CD4-positive, alpha-beta memory T cell (primary cell): ENCODE measurements at regions of chr10 and their contacts with region 1.

Region 1: GRCh38 chr10:6401562-6402348 is 178.3 kb downstream of the PRKCQ start:
- DNase-seq: peak; percentile 57 to 70 (median 65)
- H3K4me3 ChIP-seq: no peak overlapping the region
- H3K4me3 Mint-ChIP-seq: peak overlapping the region in 2 of 8 donors; percentile 51 to 63
- H3K27ac ChIP-seq: no peak overlapping the region
- H3K27ac Mint-ChIP-seq: peak overlapping the region; percentile 32 to 90 (median 64)
- H3K4me1 ChIP-seq: peaks cover 16% of the 10 kb centered on the region
- H3K4me1 Mint-ChIP-seq: peaks cover 8 to 24% (median 13%) of the 10 kb centered on the region in 4 donors
- H3K27me3 ChIP-seq: no peaks in the 10 kb centered on the region
- H3K27me3 Mint-ChIP-seq: peaks cover 0 to 1% of the 10 kb centered on the region in 2 donors

Region 2: GRCh38 chr10:6095810-6096570 is 305.8 kb before region 1 on chr10:
- CTCF ChIA-PET with region 1: interaction called, 12 read pairs
- POLR2A ChIA-PET with region 1: no interaction called
- intact Hi-C with region 1: no loop called
- DNase-seq: no peak
- H3K4me3 ChIP-seq: no peak overlapping the region
- H3K4me3 Mint-ChIP-seq: no peak overlapping the region
- H3K27ac ChIP-seq: no peak overlapping the region
- H3K27ac Mint-ChIP-seq: peak overlapping the region in 4 of 7 donors; percentile 10 to 42 (median 26)
- H3K4me1 ChIP-seq: peaks cover 37% of the 10 kb centered on the region
- H3K4me1 Mint-ChIP-seq: peaks cover 37 to 65% (median 48%) of the 10 kb centered on the region in 4 donors
- H3K27me3 ChIP-seq: no peaks in the 10 kb centered on the region
- H3K27me3 Mint-ChIP-seq: no peaks in the 10 kb centered on the region

Region 3: GRCh38 chr10:6144406-6145165 is 257.2 kb before region 1 on chr10:
- CTCF ChIA-PET with region 1: interaction called, 14 read pairs
- POLR2A ChIA-PET with region 1: interaction called, 3 read pairs
- intact Hi-C with region 1: no loop called
- DNase-seq: peak; percentile 85 to 92 (median 87)
- H3K4me3 ChIP-seq: peak overlapping the region; percentile 61 to 85
- H3K4me3 Mint-ChIP-seq: peak overlapping the region; percentile 88 to 95 (median 91)
- H3K27ac ChIP-seq: peak overlapping the region; percentile 84
- H3K27ac Mint-ChIP-seq: peak overlapping the region; percentile 89 to 97 (median 92)
- H3K4me1 ChIP-seq: peaks cover 77% of the 10 kb centered on the region
- H3K4me1 Mint-ChIP-seq: peaks cover 45 to 85% (median 64%) of the 10 kb centered on the region in 4 donors
- H3K27me3 ChIP-seq: no peaks in the 10 kb centered on the region
- H3K27me3 Mint-ChIP-seq: no peaks in the 10 kb centered on the region

Region 4: GRCh38 chr10:6171881-6172695 is 229.7 kb before region 1 on chr10:
- CTCF ChIA-PET with region 1: interaction called, 47 read pairs
- POLR2A ChIA-PET with region 1: interaction called, 21 read pairs
- intact Hi-C with region 1: no loop called
- DNase-seq: no peak
- H3K4me3 ChIP-seq: no peak overlapping the region
- H3K4me3 Mint-ChIP-seq: peak overlapping the region in 4 of 8 donors; percentile 29 to 79 (median 62)
- H3K27ac ChIP-seq: no peak overlapping the region
- H3K27ac Mint-ChIP-seq: peak overlapping the region in 6 of 7 donors; percentile 22 to 74 (median 58)
- H3K4me1 ChIP-seq: peaks cover 77% of the 10 kb centered on the region
- H3K4me1 Mint-ChIP-seq: peaks cover 50 to 94% (median 72%) of the 10 kb centered on the region in 4 donors
- H3K27me3 ChIP-seq: no peaks in the 10 kb centered on the region
- H3K27me3 Mint-ChIP-seq: no peaks in the 10 kb centered on the region

Region 5: GRCh38 chr10:6275022-6275997 is 126.4 kb before region 1 on chr10:
- CTCF ChIA-PET with region 1: interaction called, 21 read pairs
- POLR2A ChIA-PET with region 1: interaction called, 12 read pairs
- intact Hi-C with region 1: no loop called
- DNase-seq: peak; percentile 81 to 98 (median 86)
- H3K4me3 ChIP-seq: peak overlapping the region in 1 of 2 donors; percentile 26
- H3K4me3 Mint-ChIP-seq: peak overlapping the region; percentile 63 to 87 (median 78)
- H3K27ac ChIP-seq: peak overlapping the region; percentile 59
- H3K27ac Mint-ChIP-seq: peak overlapping the region; percentile 91 to 98 (median 94)
- H3K4me1 ChIP-seq: peaks cover 40% of the 10 kb centered on the region
- H3K4me1 Mint-ChIP-seq: peaks cover 26 to 52% (median 37%) of the 10 kb centered on the region in 4 donors
- H3K27me3 ChIP-seq: no peaks in the 10 kb centered on the region
- H3K27me3 Mint-ChIP-seq: no peaks in the 10 kb centered on the region

Region 6: GRCh38 chr10:6388261-6388893 is 13.4 kb before region 1 on chr10:
- CTCF ChIA-PET with region 1: interaction called, 20 read pairs
- POLR2A ChIA-PET with region 1: interaction called, 7 read pairs
- intact Hi-C with region 1: no loop called
- DNase-seq: no peak
- H3K4me3 ChIP-seq: no peak overlapping the region
- H3K4me3 Mint-ChIP-seq: no peak overlapping the region
- H3K27ac ChIP-seq: no peak overlapping the region
- H3K27ac Mint-ChIP-seq: peak overlapping the region in 1 of 7 donors; percentile 44
- H3K4me1 ChIP-seq: no peaks in the 10 kb centered on the region
- H3K4me1 Mint-ChIP-seq: peaks cover 0 to 1% (median 0%) of the 10 kb centered on the region in 4 donors
- H3K27me3 ChIP-seq: no peaks in the 10 kb centered on the region
- H3K27me3 Mint-ChIP-seq: no peaks in the 10 kb centered on the region

Region 7: GRCh38 chr10:6755781-6756460 is 354.2 kb after region 1 on chr10:
- CTCF ChIA-PET with region 1: no interaction called
- POLR2A ChIA-PET with region 1: no interaction called
- intact Hi-C with region 1: no loop called
- DNase-seq: no peak
- H3K4me3 ChIP-seq: no peak overlapping the region
- H3K4me3 Mint-ChIP-seq: no peak overlapping the region
- H3K27ac ChIP-seq: no peak overlapping the region
- H3K27ac Mint-ChIP-seq: no peak overlapping the region
- H3K4me1 ChIP-seq: no peaks in the 10 kb centered on the region
- H3K4me1 Mint-ChIP-seq: no peaks in the 10 kb centered on the region
- H3K27me3 ChIP-seq: no peaks in the 10 kb centered on the region
- H3K27me3 Mint-ChIP-seq: peaks cover 19 to 52% of the 10 kb centered on the region in 2 donors